B cell (primary cell): ENCODE measurements at regions of chr5 and their contacts with region 1.

Region 1: GRCh38 chr5:43120720-43121564 is at the start of gene ZNF131:
- DNase-seq: peak; percentile 99
- ATAC-seq: peak; percentile 88
- H3K4me3 ChIP-seq: peak within 1 kb of the TSS; percentile 82 to 91 (median 85)
- H3K4me3 Mint-ChIP-seq: peak within 1 kb of the TSS; percentile 94
- H3K27ac ChIP-seq: peak within 1 kb of the TSS; percentile 87 to 97
- H3K27ac Mint-ChIP-seq: peak within 1 kb of the TSS; percentile 97
- H3K4me1 ChIP-seq: peaks cover 24 to 26% of the 10 kb centered on the region in 2 donors
- H3K4me1 Mint-ChIP-seq: peaks cover 29% of the 10 kb centered on the region
- H3K27me3 ChIP-seq: no peaks in the 10 kb centered on the region
- H3K27me3 Mint-ChIP-seq: no peaks in the 10 kb centered on the region
- CTCF ChIP-seq: no peak
- total RNA-seq, gene ZNF131: 64.0 and 72.5 TPM in 2 replicates

Region 2: GRCh38 chr5:41869739-41870626 is 1251.0 kb before region 1 on chr5 and contains the start of gene OXCT1:
- CTCF ChIA-PET with region 1: no interaction called
- POLR2A ChIA-PET with region 1: no interaction called
- intact Hi-C with region 1: loop called (anchors 10 kb)
- DNase-seq: peak; percentile 95
- ATAC-seq: peak; percentile 95
- H3K4me3 ChIP-seq: peak within 1 kb of the TSS; percentile 74 to 97 (median 89)
- H3K4me3 Mint-ChIP-seq: peak within 1 kb of the TSS; percentile 94
- H3K27ac ChIP-seq: peak within 1 kb of the TSS; percentile 79 to 85
- H3K27ac Mint-ChIP-seq: peak within 1 kb of the TSS; percentile 95
- H3K4me1 ChIP-seq: peaks cover 16 to 20% of the 10 kb centered on the region in 2 donors
- H3K4me1 Mint-ChIP-seq: peaks cover 38% of the 10 kb centered on the region
- H3K27me3 ChIP-seq: no peaks in the 10 kb centered on the region
- H3K27me3 Mint-ChIP-seq: no peaks in the 10 kb centered on the region
- CTCF ChIP-seq: no peak
- total RNA-seq, gene OXCT1: 34.9 and 35.6 TPM in 2 replicates

Region 3: DNA sequence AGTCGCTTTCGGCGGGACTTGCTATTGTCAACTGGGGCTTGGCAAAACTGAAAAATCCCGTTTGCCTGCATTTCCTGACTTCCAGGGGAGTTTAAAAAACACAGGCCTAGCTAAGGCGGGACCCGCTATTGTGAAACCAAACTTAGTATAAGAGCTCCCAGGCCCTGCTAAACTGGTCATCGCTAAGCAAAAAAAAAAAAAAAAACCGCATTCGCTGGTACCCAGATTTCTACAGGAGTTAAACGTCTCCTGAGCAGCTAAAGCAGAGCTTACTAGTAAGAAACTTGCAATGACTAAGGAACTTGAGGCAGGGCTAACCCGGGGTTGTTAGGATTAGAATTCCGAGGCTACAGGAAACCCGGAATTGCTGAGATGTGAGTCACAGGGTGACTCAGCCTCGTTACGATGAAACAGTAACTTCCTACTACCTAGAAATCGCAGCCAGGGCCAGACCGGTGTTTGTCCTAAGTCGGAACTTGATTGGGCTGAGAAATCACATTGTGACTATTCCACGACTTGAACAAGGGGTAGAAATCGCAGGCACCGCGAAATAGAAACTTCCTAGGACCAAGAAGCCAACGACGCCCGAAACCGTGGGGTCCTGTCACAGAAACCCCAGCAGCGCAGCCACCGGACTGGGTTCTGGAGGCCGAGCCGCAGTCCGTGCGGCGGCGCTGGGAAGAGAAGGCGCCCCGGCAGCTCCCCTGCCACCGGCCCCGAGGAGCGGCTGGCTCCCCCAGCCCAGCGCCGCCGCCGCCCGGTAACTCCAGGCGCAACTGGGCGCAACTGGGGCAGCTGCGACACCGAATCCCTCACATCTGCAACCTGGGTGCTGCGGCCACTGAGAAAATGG is 170.3 kb before region 1 on chr5:
- CTCF ChIA-PET with region 1: interaction called, 8 read pairs
- POLR2A ChIA-PET with region 1: interaction called, 20 read pairs
- intact Hi-C with region 1: loop called (anchors 1 kb)
- DNase-seq: peak; percentile 85
- ATAC-seq: peak; percentile 44
- H3K4me3 ChIP-seq: peak overlapping the region; percentile 67 to 92 (median 85)
- H3K4me3 Mint-ChIP-seq: peak overlapping the region; percentile 99
- H3K27ac ChIP-seq: peak overlapping the region; percentile 93 to 97
- H3K27ac Mint-ChIP-seq: peak overlapping the region; percentile 100
- H3K4me1 ChIP-seq: peaks cover 13 to 33% of the 10 kb centered on the region in 2 donors
- H3K4me1 Mint-ChIP-seq: peaks cover 33% of the 10 kb centered on the region
- H3K27me3 ChIP-seq: no peaks in the 10 kb centered on the region
- H3K27me3 Mint-ChIP-seq: no peaks in the 10 kb centered on the region
- CTCF ChIP-seq: no peak

Region 4: DNA sequence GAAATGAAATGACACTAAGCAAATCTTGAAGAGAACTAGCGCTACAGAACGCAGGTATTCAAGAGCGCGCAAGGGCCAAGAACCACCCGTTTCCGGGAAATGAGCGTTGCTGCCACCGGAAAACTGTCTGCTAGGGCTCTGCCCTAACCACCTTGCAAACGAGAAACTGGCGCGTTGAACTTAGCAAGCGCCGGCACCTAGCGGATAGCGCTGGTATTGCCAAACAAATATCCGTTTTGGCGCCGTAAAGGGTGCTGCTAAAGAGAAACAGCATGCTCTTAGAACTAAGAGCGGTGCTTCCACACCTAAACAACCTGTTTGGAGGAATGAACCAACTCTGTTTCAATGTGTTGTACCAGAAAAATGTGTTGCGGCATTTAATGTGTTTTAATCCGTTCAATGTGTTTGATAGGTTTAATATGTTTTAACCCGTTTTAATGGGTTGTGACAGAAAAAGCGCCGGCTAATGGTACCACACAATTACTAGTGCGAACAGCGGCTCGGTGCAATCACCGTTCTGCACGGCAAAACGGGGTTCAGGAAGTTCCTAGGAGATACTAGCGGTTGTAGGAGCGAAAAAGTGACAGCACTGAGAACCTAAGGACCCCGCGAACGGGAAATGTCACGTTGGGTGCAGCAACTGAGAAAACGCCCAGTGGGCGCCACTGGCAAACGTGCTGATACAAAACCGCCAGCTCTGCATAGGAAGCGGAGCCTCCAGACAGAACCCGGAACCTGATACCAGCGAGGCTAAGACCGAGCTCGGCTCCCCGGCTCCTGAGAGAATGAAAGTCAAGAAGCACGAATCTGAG is 80.4 kb before region 1 on chr5 and contains the start of gene ANXA2R:
- CTCF ChIA-PET with region 1: interaction called, 14 read pairs
- POLR2A ChIA-PET with region 1: interaction called, 37 read pairs
- intact Hi-C with region 1: loop called (anchors 1 kb)
- DNase-seq: peak; percentile 97
- ATAC-seq: peak; percentile 60
- H3K4me3 ChIP-seq: peak within 1 kb of the TSS; percentile 62 to 95 (median 81)
- H3K4me3 Mint-ChIP-seq: peak within 1 kb of the TSS; percentile 97
- H3K27ac ChIP-seq: peak within 1 kb of the TSS; percentile 98 to 99
- H3K27ac Mint-ChIP-seq: peak within 1 kb of the TSS; percentile 98
- H3K4me1 ChIP-seq: peaks cover 25 to 44% of the 10 kb centered on the region in 2 donors
- H3K4me1 Mint-ChIP-seq: peaks cover 39% of the 10 kb centered on the region
- H3K27me3 ChIP-seq: no peaks in the 10 kb centered on the region
- H3K27me3 Mint-ChIP-seq: no peaks in the 10 kb centered on the region
- CTCF ChIP-seq: peak; percentile 86
- total RNA-seq, gene ANXA2R: 19.3 and 20.0 TPM in 2 replicates

Region 5: DNA sequence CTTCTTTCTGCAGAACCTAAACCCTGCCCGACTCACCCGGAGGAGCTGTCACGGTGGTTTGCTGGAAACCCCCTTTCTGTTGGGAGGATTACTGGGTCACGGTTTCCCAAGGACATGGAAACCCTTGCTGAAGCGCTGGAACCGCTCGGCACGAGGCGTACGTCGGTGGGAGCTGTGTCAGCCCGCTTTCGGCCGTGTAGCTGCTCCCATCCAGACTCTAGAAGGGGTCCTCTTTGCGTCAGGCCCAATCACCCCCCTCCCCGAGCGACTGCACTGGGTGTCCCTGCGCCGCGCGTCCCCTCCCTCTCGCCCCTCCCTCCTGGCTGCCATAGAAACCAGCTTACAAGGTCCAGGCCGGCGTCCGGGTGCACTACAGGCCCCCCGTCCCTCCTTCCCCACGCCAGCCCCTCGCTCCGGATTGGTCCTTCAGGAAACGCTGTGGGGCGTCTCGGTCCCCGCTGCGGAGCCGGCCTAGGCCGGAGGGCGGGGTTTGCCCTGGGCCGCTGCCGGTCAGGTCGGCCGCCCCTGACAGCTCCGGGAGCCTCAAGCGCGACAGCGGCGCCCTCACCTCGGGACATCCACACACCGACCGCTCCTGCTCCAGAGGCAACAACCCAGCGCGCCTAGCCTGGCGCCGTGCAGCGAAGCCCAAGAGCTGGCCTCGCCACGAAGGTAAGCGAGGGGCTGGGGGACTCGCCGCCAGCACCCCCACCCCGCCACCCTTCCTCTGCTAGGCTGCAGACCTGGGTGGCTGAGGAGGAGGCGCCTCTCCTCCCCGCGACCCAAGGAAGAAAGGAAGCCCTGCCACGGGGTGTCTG is 71.0 kb after region 1 on chr5 and contains the start of gene NIM1K:
- CTCF ChIA-PET with region 1: no interaction called
- POLR2A ChIA-PET with region 1: no interaction called
- intact Hi-C with region 1: loop called (anchors 2 kb)
- DNase-seq: peak; percentile 49
- ATAC-seq: peak; percentile 61
- H3K4me3 ChIP-seq: peak within 1 kb of the TSS; percentile 34 to 66 (median 58)
- H3K4me3 Mint-ChIP-seq: peak within 1 kb of the TSS; percentile 93
- H3K27ac ChIP-seq: no peak within 1 kb of the TSS
- H3K27ac Mint-ChIP-seq: peak within 1 kb of the TSS; percentile 26
- H3K4me1 ChIP-seq: peaks cover 21% of the 10 kb centered on the region in 2 donors
- H3K4me1 Mint-ChIP-seq: peaks cover 33% of the 10 kb centered on the region
- H3K27me3 ChIP-seq: peaks cover 0 to 18% (median 7%) of the 10 kb centered on the region in 4 experiments
- H3K27me3 Mint-ChIP-seq: peaks cover 25% of the 10 kb centered on the region
- CTCF ChIP-seq: no peak
- total RNA-seq, gene NIM1K: 0.32 and 0.39 TPM in 2 replicates

Region 6: GRCh38 chr5:43484106-43484849 is 363.3 kb after region 1 on chr5:
- CTCF ChIA-PET with region 1: interaction called, 27 read pairs
- POLR2A ChIA-PET with region 1: interaction called, 37 read pairs
- intact Hi-C with region 1: loop called (anchors 1 kb)
- DNase-seq: peak; percentile 93
- ATAC-seq: peak; percentile 68
- H3K4me3 ChIP-seq: peak overlapping the region; percentile 58 to 92 (median 89)
- H3K4me3 Mint-ChIP-seq: peak overlapping the region; percentile 100
- H3K27ac ChIP-seq: peak overlapping the region; percentile 94 to 99
- H3K27ac Mint-ChIP-seq: peak overlapping the region; percentile 100
- H3K4me1 ChIP-seq: peaks cover 22 to 23% of the 10 kb centered on the region in 2 donors
- H3K4me1 Mint-ChIP-seq: peaks cover 33% of the 10 kb centered on the region
- H3K27me3 ChIP-seq: no peaks in the 10 kb centered on the region
- H3K27me3 Mint-ChIP-seq: no peaks in the 10 kb centered on the region
- CTCF ChIP-seq: peak; percentile 81